ENCODE measurements at regions of chr1 and their contacts with region 1.

Region 1: DNA sequence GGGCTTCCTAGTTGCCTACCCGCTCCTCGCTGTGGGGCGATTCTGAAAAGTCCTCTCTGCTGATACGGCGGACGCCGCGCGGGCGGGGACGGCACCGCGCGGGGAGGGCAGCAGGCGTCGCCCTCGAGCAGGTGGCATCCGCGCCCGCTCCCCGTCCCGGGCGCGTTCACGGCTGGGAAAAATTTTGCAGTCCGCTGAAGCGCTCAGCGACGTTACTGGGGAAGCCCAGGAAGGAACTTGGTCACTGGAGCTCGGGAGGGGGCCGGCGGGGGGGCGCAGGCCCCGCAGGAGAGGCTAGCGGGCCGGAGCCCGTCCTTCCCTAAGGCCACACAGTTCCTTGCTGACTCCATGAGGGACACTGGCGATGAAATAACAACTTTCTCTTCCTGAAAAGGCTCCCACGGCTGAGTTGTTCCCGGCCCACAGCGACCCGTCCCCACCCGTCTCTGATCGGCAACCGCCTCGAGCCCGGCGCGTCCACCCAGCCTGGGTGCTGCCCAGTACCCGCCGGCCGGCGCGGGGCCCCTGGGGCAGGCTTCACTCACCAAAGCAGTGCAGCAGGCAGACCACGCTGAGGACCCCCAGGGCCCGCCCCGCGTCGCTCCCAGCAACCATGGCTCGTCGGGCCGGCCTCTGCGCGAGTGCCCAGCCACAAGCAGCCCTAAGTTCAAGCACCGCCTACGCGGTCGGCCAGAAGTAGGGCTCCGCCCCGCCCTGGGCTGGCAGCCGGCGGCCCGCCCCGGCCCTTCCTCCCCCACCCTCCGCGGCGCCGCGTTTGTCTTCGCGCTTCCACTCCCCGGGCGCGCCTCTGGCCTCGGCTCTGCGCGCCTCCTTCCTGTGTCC is at the start of gene CD58:
- DNase-seq: peak; percentile 52 to 91 (median 74)
- ATAC-seq: peak; percentile 81
- H3K4me3 ChIP-seq: peak within 1 kb of the TSS; percentile 96
- H3K4me3 Mint-ChIP-seq: peak within 1 kb of the TSS; percentile 96
- H3K27ac ChIP-seq: peak within 1 kb of the TSS; percentile 72 to 87
- H3K27ac Mint-ChIP-seq: peak within 1 kb of the TSS; percentile 91
- H3K4me1 ChIP-seq: peaks cover 34% of the 10 kb centered on the region
- H3K4me1 Mint-ChIP-seq: peaks cover 43% of the 10 kb centered on the region
- H3K27me3 ChIP-seq: no peaks in the 10 kb centered on the region
- H3K27me3 Mint-ChIP-seq: peaks cover 4% of the 10 kb centered on the region
- CTCF ChIP-seq: peak; percentile 72
- total RNA-seq, gene CD58: 4.2 to 5.7 TPM

Region 2: GRCh38 chr1:116218990-116219321 is 351.6 kb before region 1 on chr1:
- CTCF ChIA-PET with region 1: no interaction called
- POLR2A ChIA-PET with region 1: no interaction called
- intact Hi-C with region 1: no loop called
- DNase-seq: no peak
- ATAC-seq: no peak
- H3K4me3 ChIP-seq: no peak overlapping the region
- H3K4me3 Mint-ChIP-seq: no peak overlapping the region
- H3K27ac ChIP-seq: no peak overlapping the region
- H3K27ac Mint-ChIP-seq: no peak overlapping the region
- H3K4me1 ChIP-seq: no peaks in the 10 kb centered on the region
- H3K4me1 Mint-ChIP-seq: no peaks in the 10 kb centered on the region
- H3K27me3 ChIP-seq: no peaks in the 10 kb centered on the region
- H3K27me3 Mint-ChIP-seq: no peaks in the 10 kb centered on the region
- CTCF ChIP-seq: no peak

Region 3: DNA sequence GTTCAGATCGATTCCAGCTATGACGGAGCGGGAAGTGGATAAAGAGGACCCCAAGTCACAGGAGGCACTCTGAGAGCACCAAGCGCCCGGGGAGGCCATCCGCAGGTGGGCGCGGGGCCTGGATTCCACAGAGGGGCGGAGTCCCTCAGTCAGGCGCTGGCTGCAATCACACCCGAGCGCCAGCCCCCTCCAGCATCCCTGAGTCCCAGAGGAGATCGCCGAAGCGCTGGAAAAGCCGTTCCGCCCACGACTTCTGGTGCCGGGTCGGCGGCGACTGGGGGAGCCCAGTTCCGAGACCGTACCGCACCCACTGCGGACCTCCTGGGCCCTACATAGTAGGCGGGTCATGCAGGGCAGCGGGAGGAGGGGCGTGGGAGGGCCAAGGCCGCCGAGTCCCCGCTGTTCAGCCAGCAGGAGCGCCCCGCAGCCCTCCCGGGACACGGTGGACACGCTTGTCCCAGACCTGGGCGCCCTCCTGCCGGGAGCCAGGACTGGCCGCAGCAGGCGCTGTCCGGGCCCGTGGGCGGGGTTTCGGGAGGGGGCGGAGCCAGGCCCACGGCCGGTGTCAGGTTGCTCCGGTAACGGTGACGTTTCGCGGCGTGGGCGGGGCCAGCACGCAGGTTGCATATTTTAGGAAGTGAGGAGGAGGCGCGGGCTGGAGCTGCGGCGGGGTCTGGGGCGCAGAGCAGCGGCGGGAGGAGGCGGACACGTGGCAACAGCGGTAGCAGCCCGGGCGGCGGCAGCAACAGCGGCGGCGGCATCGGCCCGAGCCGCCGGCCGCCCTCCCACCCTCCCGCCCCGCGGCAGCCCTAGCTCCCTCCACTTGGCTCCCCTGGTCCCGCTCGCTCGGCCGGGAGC is 197.8 kb before region 1 on chr1 and contains the start of gene ATP1A1:
- CTCF ChIA-PET with region 1: no interaction called
- POLR2A ChIA-PET with region 1: no interaction called
- intact Hi-C with region 1: loop called in 1 of 2 experiments (anchors 2 kb)
- DNase-seq: peak; percentile 95 to 100 (median 98)
- ATAC-seq: peak; percentile 66
- H3K4me3 ChIP-seq: peak within 1 kb of the TSS; percentile 77
- H3K4me3 Mint-ChIP-seq: peak within 1 kb of the TSS; percentile 98
- H3K27ac ChIP-seq: peak within 1 kb of the TSS; percentile 88 to 98
- H3K27ac Mint-ChIP-seq: peak within 1 kb of the TSS; percentile 93
- H3K4me1 ChIP-seq: peaks cover 37% of the 10 kb centered on the region
- H3K4me1 Mint-ChIP-seq: peaks cover 58% of the 10 kb centered on the region
- H3K27me3 ChIP-seq: no peaks in the 10 kb centered on the region
- H3K27me3 Mint-ChIP-seq: no peaks in the 10 kb centered on the region
- CTCF ChIP-seq: no peak
- total RNA-seq, gene ATP1A1: 251 to 262 TPM

Region 4: DNA sequence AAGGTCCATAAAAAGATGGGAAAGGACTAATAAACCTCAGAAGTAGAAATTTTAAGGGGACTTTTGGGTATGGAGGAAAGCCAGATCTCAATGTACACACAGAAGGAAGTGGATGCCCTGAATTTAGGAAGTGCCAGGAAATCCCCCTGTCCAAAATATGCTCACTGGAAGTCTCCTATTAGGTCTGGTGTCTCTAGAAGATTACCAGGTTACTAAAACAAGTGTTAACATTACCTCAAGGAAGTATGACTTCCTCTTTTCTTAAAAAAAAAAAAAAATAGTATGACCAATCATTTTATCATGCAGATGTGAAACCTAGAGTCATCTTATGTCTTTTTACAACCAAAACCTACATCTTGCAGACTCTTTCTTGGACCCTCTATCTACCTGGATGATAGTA is 30.5 kb before region 1 on chr1:
- CTCF ChIA-PET with region 1: interaction called, 10 read pairs
- POLR2A ChIA-PET with region 1: interaction called, 3 read pairs
- intact Hi-C with region 1: no loop called
- DNase-seq: peak in 3 of 14 experiments; percentile 27 to 53 (median 51)
- ATAC-seq: no peak
- H3K4me3 ChIP-seq: no peak overlapping the region
- H3K4me3 Mint-ChIP-seq: no peak overlapping the region
- H3K27ac ChIP-seq: no peak overlapping the region
- H3K27ac Mint-ChIP-seq: no peak overlapping the region
- H3K4me1 ChIP-seq: peaks cover 16% of the 10 kb centered on the region
- H3K4me1 Mint-ChIP-seq: peaks cover 27% of the 10 kb centered on the region
- H3K27me3 ChIP-seq: no peaks in the 10 kb centered on the region
- H3K27me3 Mint-ChIP-seq: no peaks in the 10 kb centered on the region
- CTCF ChIP-seq: no peak

Region 5: GRCh38 chr1:116654355-116654754 is 83.8 kb after region 1 on chr1:
- CTCF ChIA-PET with region 1: no interaction called
- POLR2A ChIA-PET with region 1: no interaction called
- intact Hi-C with region 1: no loop called
- DNase-seq: no peak
- ATAC-seq: no peak
- H3K4me3 ChIP-seq: no peak overlapping the region
- H3K4me3 Mint-ChIP-seq: no peak overlapping the region
- H3K27ac ChIP-seq: no peak overlapping the region
- H3K27ac Mint-ChIP-seq: no peak overlapping the region
- H3K4me1 ChIP-seq: no peaks in the 10 kb centered on the region
- H3K4me1 Mint-ChIP-seq: no peaks in the 10 kb centered on the region
- H3K27me3 ChIP-seq: no peaks in the 10 kb centered on the region
- H3K27me3 Mint-ChIP-seq: peaks cover 5% of the 10 kb centered on the region
- CTCF ChIP-seq: no peak

Region 6: DNA sequence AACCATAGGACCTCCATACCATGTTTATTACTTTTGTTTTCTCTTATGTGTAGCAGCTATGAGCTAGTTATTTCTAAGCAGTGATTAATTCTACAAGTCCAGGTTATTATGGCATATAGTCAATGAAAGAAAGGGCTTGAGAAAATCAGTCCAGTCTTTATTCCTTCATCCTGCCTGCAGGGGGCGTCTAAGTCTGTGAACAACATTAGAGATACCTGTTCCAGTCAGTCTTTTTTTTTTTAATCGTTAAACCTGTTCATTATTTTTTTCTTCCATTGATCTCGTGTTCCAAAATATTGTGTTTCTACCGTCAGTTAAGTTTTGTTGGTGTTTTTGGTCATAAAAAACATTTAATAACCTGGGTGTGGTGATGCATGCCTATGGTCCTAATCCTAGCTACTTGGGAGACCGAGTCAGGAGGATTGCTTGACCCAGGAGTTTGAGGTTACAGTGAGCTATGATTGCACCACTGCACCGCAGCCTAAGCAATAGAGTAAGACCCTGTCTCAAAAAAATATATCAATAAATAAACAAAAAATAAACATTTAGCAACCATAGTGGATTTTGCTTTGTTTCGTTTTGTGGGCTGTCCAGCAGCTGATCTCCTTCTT is 154.3 kb after region 1 on chr1:
- CTCF ChIA-PET with region 1: no interaction called
- POLR2A ChIA-PET with region 1: no interaction called
- intact Hi-C with region 1: loop called in 1 of 2 experiments (anchors 5 kb)
- DNase-seq: peak; percentile 56 to 90 (median 72)
- ATAC-seq: no peak
- H3K4me3 ChIP-seq: no peak overlapping the region
- H3K4me3 Mint-ChIP-seq: no peak overlapping the region
- H3K27ac ChIP-seq: no peak overlapping the region
- H3K27ac Mint-ChIP-seq: no peak overlapping the region
- H3K4me1 ChIP-seq: peaks cover 3% of the 10 kb centered on the region
- H3K4me1 Mint-ChIP-seq: peaks cover 22% of the 10 kb centered on the region
- H3K27me3 ChIP-seq: no peaks in the 10 kb centered on the region
- H3K27me3 Mint-ChIP-seq: no peaks in the 10 kb centered on the region
- CTCF ChIP-seq: peak; percentile 97

Region 7: GRCh38 chr1:117121776-117122697 is 551.5 kb after region 1 on chr1:
- CTCF ChIA-PET with region 1: no interaction called
- POLR2A ChIA-PET with region 1: no interaction called
- intact Hi-C with region 1: loop called in 1 of 2 experiments (anchors 2 kb)
- DNase-seq: peak; percentile 69 to 92 (median 78)
- ATAC-seq: peak; percentile 89
- H3K4me3 ChIP-seq: peak overlapping the region; percentile 93
- H3K4me3 Mint-ChIP-seq: peak overlapping the region; percentile 87
- H3K27ac ChIP-seq: no peak overlapping the region
- H3K27ac Mint-ChIP-seq: no peak overlapping the region
- H3K4me1 ChIP-seq: peaks cover 17% of the 10 kb centered on the region
- H3K4me1 Mint-ChIP-seq: peaks cover 9% of the 10 kb centered on the region
- H3K27me3 ChIP-seq: peaks cover 0 to under 1% of the 10 kb centered on the region in 2 experiments
- H3K27me3 Mint-ChIP-seq: peaks cover 7% of the 10 kb centered on the region
- CTCF ChIP-seq: peak; percentile 78

Region 8: GRCh38 chr1:117268535-117269455 is 698.2 kb after region 1 on chr1:
- CTCF ChIA-PET with region 1: no interaction called
- POLR2A ChIA-PET with region 1: no interaction called
- intact Hi-C with region 1: no loop called
- DNase-seq: no peak
- ATAC-seq: no peak
- H3K4me3 ChIP-seq: no peak overlapping the region
- H3K4me3 Mint-ChIP-seq: no peak overlapping the region
- H3K27ac ChIP-seq: no peak overlapping the region
- H3K27ac Mint-ChIP-seq: no peak overlapping the region
- H3K4me1 ChIP-seq: no peaks in the 10 kb centered on the region
- H3K4me1 Mint-ChIP-seq: no peaks in the 10 kb centered on the region
- H3K27me3 ChIP-seq: peaks cover 0 to 6% of the 10 kb centered on the region in 2 experiments
- H3K27me3 Mint-ChIP-seq: peaks cover 28% of the 10 kb centered on the region
- CTCF ChIP-seq: no peak

Measured in CD4-positive, alpha-beta T cell (primary cell).